BJ (cell line): ENCODE measurements at regions of chr3 and their contacts with region 1.

Region 1: DNA sequence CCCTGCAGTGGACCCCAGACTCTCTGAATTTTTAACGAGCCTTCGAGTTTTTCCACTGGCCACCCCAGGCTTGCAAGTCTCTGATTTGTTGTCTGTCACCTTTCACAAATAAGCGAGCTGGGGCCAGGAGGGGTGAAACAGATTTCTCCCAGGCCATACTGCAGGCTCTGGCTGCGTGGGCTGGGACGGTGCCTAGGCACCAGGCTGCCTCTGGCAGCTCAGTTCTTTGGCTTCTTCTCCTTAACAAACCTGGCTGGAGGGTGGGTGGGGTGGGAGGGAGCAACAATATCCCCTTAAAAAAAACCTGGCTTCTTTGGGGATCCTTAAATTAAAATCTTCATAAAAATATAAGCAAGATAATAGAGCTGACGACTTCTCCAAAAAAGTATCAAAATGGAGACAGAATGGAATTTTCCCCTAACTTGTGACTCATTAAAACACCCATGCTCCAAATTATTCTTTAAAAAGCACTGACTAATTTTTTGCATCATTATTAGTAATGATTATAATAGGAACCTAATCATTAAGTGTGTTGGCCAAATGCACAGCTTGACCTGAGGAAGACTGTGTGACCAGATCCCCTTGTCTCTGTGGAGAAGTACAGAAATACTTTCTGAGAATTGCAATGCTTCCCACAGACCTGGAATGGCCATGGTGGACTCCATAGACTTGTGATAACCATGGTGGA is 84.1 kb downstream of the SNRK start:
- DNase-seq: no peak
- H3K4me3 ChIP-seq: no peak overlapping the region
- H3K27me3 ChIP-seq: no peaks in the 10 kb centered on the region
- CTCF ChIP-seq: no peak

Region 2: DNA sequence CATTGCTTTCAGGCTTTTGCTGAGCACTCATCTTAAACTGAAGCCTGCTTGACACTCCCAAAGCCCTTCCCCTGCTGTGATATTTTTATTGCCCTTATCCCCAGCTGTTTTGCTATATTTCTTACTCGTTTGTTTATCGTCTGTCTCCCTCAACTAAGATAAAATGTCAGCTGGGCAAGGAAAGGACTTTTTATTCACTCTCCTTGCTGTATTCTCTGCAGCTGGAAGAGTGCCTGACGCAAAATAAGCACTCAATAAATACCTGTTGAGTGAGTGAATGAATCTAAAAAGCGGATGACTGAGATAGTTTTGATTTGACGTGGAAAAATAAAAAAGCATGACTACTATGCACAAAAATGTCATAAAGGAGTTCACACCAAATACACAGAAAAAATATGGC is 179.8 kb before region 1 on chr3:
- CTCF ChIA-PET with region 1: no interaction called
- POLR2A ChIA-PET with region 1: no interaction called
- DNase-seq: peak; percentile 99
- H3K4me3 ChIP-seq: no peak overlapping the region
- H3K27me3 ChIP-seq: no peaks in the 10 kb centered on the region
- CTCF ChIP-seq: no peak

Region 3: DNA sequence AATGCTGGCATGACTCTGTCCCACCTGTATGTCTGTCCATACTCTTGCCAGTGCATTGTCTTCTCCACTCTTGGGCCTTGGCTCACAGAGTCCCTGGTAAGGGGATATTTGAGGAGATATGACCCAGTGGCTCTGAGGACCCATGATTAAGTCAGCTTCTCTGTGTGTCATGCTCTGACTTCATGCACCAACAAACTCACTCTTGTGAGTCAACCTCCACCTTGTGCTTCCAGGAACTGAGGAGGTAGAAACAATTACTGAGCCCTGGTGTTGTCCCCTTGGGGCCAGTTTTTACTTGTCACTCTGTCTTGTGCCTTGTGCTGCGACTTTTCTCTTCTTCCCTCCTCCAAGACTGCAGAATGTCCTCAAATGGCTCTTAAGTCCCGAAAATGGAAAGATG is 447.4 kb after region 1 on chr3:
- CTCF ChIA-PET with region 1: no interaction called
- POLR2A ChIA-PET with region 1: no interaction called
- DNase-seq: no peak
- H3K4me3 ChIP-seq: no peak overlapping the region
- H3K27me3 ChIP-seq: peaks cover 8% of the 10 kb centered on the region
- CTCF ChIP-seq: no peak

Region 4: DNA sequence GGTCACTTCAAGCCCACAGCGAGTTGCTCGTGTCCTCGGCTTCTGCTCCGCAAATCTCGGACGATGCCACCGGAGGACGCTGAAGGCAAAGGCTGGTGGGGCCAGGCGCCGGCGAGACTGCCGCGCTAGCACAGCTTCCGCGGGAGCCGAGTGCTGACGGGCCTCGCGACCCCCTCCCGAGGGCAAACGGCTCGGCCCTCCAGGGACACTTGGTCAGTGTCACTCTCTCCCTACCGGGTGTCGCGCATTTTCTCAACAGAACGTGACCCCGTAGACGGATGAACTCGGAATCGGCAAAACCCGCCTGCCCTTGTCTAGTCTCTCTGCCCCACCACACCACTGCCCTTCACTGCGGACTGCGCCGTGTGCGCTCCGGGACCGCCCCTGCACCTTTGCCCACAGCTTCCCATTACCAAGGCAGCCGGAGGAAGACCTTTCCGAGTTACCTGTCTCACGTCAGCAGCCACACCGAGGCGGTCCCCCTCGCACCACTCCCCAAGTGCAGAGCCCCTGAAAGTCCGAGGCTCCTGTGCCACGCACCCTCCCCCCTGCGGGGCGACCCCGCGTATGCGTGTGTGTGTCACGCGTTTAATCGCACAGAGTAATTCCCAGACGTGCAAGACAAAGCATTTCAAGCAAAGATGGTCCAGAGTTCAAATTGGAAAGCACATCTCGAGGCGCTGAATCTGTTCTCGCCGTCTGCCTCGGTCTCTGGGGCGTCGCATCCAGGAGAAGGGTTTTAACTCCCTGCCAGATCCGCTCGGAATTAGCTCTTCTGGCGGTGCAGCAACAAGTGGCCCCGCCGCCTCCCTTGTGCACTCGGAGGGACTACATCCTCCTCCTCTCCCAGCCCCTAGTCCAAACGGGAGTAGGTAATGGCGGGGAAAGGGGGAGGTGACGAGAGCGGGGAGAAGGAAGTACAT is 626.2 kb after region 1 on chr3:
- CTCF ChIA-PET with region 1: no interaction called
- POLR2A ChIA-PET with region 1: interaction called, 15 read pairs
- DNase-seq: no peak
- H3K4me3 ChIP-seq: peak overlapping the region; percentile 49
- H3K27me3 ChIP-seq: peaks cover 1% of the 10 kb centered on the region; the same call in 1 of the 2 replicates
- CTCF ChIP-seq: peak; percentile 52